Caco-2 (cell line): ENCODE measurements at regions of chr11 and their contacts with region 1.

Region 1: GRCh38 chr11:87463486-87464102 is 425.9 kb downstream of the TMEM135 start:
- DNase-seq: peak; percentile 66 to 72
- H3K4me3 ChIP-seq: no peak overlapping the region
- H3K4me3 Mint-ChIP-seq: no peak overlapping the region
- H3K27ac Mint-ChIP-seq: no peak overlapping the region
- H3K4me1 ChIP-seq: peaks cover 27% of the 10 kb centered on the region
- H3K4me1 Mint-ChIP-seq: no peaks in the 10 kb centered on the region
- H3K27me3 ChIP-seq: no peaks in the 10 kb centered on the region
- H3K27me3 Mint-ChIP-seq: no peaks in the 10 kb centered on the region
- CTCF ChIP-seq: peak; percentile 41 to 48

Region 2: GRCh38 chr11:87437844-87438223 is 25.8 kb before region 1 on chr11:
- CTCF ChIA-PET with region 1: no interaction called
- POLR2A ChIA-PET with region 1: no interaction called
- intact Hi-C with region 1: no loop called
- DNase-seq: no peak
- H3K4me3 ChIP-seq: no peak overlapping the region
- H3K4me3 Mint-ChIP-seq: no peak overlapping the region
- H3K27ac Mint-ChIP-seq: no peak overlapping the region
- H3K4me1 ChIP-seq: peaks cover 6% of the 10 kb centered on the region; the same call in 1 of the 2 replicates
- H3K4me1 Mint-ChIP-seq: no peaks in the 10 kb centered on the region
- H3K27me3 ChIP-seq: no peaks in the 10 kb centered on the region
- H3K27me3 Mint-ChIP-seq: no peaks in the 10 kb centered on the region
- CTCF ChIP-seq: no peak

Region 3: DNA sequence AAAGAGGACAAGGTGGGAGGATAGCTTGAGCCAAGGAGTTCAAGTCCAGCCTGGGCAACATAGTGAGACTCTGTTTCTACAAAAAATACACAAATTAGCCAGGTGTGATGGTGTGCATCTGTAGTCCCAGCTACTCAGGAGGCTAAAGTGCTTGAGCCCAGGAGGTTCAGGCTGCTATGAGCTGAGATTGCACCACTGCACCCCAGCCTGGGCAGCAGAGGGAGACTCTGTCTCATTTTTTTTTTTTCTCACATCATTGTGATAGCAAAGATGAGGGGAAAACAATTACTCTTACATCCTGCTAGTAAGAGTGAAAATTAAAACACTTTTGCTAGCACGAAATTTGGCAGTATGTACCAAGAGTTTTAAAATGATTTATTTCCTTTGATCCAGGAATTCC is 37.8 kb after region 1 on chr11:
- CTCF ChIA-PET with region 1: no interaction called
- POLR2A ChIA-PET with region 1: no interaction called
- intact Hi-C with region 1: loop called (anchors 2 kb)
- DNase-seq: no peak
- H3K4me3 ChIP-seq: no peak overlapping the region
- H3K4me3 Mint-ChIP-seq: no peak overlapping the region
- H3K27ac Mint-ChIP-seq: no peak overlapping the region
- H3K4me1 ChIP-seq: no peaks in the 10 kb centered on the region
- H3K4me1 Mint-ChIP-seq: no peaks in the 10 kb centered on the region
- H3K27me3 ChIP-seq: no peaks in the 10 kb centered on the region
- H3K27me3 Mint-ChIP-seq: peaks cover 6% of the 10 kb centered on the region
- CTCF ChIP-seq: no peak

Region 4: DNA sequence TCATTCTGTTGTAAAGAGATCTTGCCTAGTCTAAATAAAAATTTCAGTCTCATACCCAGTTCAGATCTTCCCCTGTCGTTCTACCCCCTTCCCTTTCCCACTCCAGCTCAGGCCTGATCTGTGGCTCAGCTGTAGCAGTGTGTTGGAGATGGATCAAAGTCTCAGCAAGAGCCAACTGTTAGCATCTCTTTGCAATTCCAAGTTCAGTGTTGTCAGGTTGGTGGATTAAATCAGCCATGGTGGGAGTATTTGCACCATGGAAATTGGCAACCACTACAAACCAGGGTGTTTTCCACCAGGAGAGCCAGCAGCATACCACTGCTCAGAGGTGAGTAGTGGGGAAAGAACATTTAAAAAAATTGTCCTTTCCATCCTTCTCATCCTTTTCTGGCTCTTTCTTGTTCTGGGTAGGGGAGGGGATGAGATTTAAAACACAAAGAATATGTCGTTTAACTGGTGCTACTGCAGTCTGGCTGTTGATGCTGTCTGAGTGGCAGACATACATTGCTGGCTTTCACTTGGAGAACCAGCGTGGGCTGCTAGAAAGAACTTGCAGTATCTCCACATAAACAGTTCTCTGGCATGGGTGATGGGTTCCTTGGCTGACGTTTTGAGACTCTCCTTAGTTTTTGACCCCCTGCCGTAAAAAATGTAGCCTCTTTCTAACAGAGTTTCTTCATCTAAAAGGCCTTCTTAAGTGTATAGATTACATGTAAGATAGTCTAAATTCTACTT is 197.5 kb after region 1 on chr11:
- CTCF ChIA-PET with region 1: no interaction called
- POLR2A ChIA-PET with region 1: no interaction called
- intact Hi-C with region 1: loop called (anchors 5 kb)
- DNase-seq: no peak
- H3K4me3 ChIP-seq: no peak overlapping the region
- H3K4me3 Mint-ChIP-seq: no peak overlapping the region
- H3K27ac Mint-ChIP-seq: no peak overlapping the region
- H3K4me1 ChIP-seq: no peaks in the 10 kb centered on the region
- H3K4me1 Mint-ChIP-seq: no peaks in the 10 kb centered on the region
- H3K27me3 ChIP-seq: no peaks in the 10 kb centered on the region
- H3K27me3 Mint-ChIP-seq: peaks cover 18% of the 10 kb centered on the region
- CTCF ChIP-seq: no peak

Region 5: GRCh38 chr11:87743007-87743406 is 279.4 kb after region 1 on chr11:
- CTCF ChIA-PET with region 1: no interaction called
- POLR2A ChIA-PET with region 1: no interaction called
- intact Hi-C with region 1: loop called (anchors 5 kb)
- DNase-seq: peak in 1 of 2 experiments; percentile 39
- H3K4me3 ChIP-seq: no peak overlapping the region
- H3K4me3 Mint-ChIP-seq: no peak overlapping the region
- H3K27ac Mint-ChIP-seq: no peak overlapping the region
- H3K4me1 ChIP-seq: no peaks in the 10 kb centered on the region
- H3K4me1 Mint-ChIP-seq: peaks cover 7% of the 10 kb centered on the region
- H3K27me3 ChIP-seq: no peaks in the 10 kb centered on the region
- H3K27me3 Mint-ChIP-seq: no peaks in the 10 kb centered on the region
- CTCF ChIP-seq: peak; percentile 33 to 49

Region 6: DNA sequence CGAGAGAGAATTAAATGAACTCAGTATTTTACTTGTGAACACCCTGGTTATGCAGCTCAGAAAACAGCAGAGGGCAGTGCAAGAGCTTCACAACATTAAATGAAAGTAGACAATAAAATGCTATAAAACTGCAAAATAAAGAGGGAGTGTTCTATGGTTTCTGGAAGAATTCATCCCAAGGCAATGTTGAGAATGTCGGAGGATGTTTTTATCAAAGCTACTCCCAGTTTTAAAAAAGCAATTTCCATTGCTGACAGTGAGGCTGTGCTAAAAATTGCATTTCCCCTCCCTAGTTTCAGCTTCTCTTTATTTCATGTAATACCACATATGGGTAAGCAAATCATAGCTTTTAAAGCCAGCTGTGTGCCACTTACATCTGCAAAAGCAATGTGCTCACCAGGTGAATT is 414.8 kb after region 1 on chr11:
- CTCF ChIA-PET with region 1: no interaction called
- POLR2A ChIA-PET with region 1: no interaction called
- intact Hi-C with region 1: loop called (anchors 1 kb)
- DNase-seq: peak; percentile 32 to 45
- H3K4me3 ChIP-seq: no peak overlapping the region
- H3K4me3 Mint-ChIP-seq: no peak overlapping the region
- H3K27ac Mint-ChIP-seq: no peak overlapping the region
- H3K4me1 ChIP-seq: no peaks in the 10 kb centered on the region
- H3K4me1 Mint-ChIP-seq: no peaks in the 10 kb centered on the region
- H3K27me3 ChIP-seq: no peaks in the 10 kb centered on the region
- H3K27me3 Mint-ChIP-seq: no peaks in the 10 kb centered on the region
- CTCF ChIP-seq: peak; percentile 78 to 82